Activated T-helper 1 cell treated with anti-CD3 and anti-CD28 coated beads, Interleukin-12 subunit alpha, Interleukin-12 subunit beta, Interleukin-2, Interleukin-4 antibody, amounts not matched to agents 30 ng/mL and 10 ng/mL and 1 ng/mL, durations not matched to agents 14 hours and 24 hours and 36 hours (primary cell): ENCODE measurements at regions of chr7 and their contacts with region 1.

Region 1: GRCh38 chr7:50449881-50450589 is at the start of gene FIGNL1:
- DNase-seq: peak; percentile 81
- H3K4me3 Mint-ChIP-seq: peak within 1 kb of the TSS; percentile 92
- H3K27ac Mint-ChIP-seq: peak within 1 kb of the TSS; percentile 90
- H3K4me1 Mint-ChIP-seq: peaks cover 42% of the 10 kb centered on the region
- H3K27me3 Mint-ChIP-seq: peaks cover 15% of the 10 kb centered on the region
- total RNA-seq, gene FIGNL1: 41.6 and 45.4 TPM in 2 replicates

Region 2: GRCh38 chr7:50073093-50073492 is 376.9 kb before region 1 on chr7:
- intact Hi-C with region 1: no loop called
- DNase-seq: no peak
- H3K4me3 Mint-ChIP-seq: no peak overlapping the region
- H3K27ac Mint-ChIP-seq: no peak overlapping the region
- H3K4me1 Mint-ChIP-seq: peaks cover 20% of the 10 kb centered on the region
- H3K27me3 Mint-ChIP-seq: peaks cover 29% of the 10 kb centered on the region

Region 3: DNA sequence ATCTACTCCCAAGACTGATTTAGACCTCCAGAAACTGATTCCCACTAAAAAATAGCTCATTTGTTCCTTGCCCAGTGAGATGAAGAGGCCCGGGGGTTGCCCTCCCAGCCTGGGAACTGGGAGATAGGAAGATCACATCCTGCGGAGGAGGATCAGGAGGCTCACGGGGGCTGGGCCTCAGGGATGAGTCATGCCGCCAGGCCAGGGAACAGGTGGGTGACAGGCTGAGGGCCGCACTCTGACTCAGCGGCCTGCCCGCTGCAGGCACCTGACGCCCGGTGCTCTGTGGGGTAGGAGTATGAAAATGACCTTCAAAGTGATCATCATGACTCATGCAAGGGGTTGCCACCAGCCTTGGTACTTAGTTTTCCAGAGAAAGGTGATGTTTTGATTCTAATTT is 252.5 kb before region 1 on chr7:
- intact Hi-C with region 1: loop called (anchors 2 kb)
- DNase-seq: no peak
- H3K4me3 Mint-ChIP-seq: peak overlapping the region; percentile 30
- H3K27ac Mint-ChIP-seq: peak overlapping the region; percentile 80
- H3K4me1 Mint-ChIP-seq: peaks cover 39% of the 10 kb centered on the region
- H3K27me3 Mint-ChIP-seq: peaks cover 24% of the 10 kb centered on the region

Region 4: DNA sequence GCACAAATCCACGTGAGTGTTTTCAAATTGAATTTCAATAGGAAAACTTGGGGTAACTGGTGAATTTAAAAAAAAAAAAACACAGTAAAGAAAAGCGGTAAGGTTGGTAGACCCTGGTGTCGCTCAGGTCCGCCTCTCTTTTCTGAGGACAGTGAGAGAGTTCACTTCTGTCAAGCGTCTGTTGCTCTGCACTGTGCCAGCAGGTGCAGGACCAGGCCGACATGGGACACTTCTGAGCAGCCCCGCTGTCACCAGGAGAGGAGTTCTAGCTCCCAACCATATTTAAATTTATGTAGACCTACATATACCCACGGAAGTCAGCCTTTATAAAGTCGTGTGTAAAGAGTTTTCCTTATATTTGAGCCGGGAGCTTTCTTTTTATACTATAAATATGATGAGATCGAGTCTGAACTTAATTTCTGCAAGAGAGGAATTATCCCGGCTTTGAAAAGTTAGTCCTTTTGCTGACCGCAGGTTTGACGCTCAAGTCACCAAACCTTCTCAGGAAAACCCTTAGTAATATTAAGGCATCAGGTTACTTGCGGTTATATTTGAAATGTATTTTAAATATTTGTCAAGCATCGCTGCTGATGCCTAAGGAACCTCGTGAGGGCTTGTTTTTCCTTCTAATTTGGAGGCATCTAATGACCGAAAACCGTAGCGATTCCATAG is 145.0 kb before region 1 on chr7:
- intact Hi-C with region 1: loop called (anchors 2 kb)
- DNase-seq: no peak
- H3K4me3 Mint-ChIP-seq: peak overlapping the region; percentile 99
- H3K27ac Mint-ChIP-seq: peak overlapping the region; percentile 98
- H3K4me1 Mint-ChIP-seq: peaks cover 52% of the 10 kb centered on the region
- H3K27me3 Mint-ChIP-seq: no peaks in the 10 kb centered on the region

Region 5: DNA sequence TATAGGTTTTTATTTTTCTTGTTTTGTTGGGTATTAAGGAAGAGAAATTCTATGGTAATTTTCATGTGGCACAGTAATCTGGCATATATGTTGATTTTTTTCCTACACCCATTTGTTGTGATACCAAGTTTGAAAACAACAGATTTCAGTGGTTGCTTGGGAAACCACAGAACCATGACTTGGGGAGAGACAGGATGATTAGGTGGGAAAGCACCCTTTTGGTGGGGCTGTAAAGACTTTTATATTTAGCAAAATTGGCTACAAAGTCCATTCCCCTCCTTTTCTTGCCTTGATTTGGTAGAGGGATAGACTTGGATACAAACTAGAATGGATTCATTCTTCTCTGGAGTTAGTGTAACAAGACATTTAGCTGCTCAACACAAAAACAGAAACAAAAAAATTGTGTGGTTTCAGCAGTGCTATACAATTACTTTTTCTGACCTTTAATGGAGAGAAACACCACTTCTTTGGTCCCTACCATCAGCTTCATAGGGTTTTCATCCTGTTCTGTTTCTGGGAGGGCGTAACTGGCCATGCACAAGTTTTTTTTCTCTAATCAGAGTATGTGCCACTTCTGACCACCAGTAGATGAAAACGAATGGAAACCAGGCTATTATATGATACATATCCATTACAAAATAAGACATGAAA is 52.6 kb before region 1 on chr7:
- intact Hi-C with region 1: loop called (anchors 1 kb)
- DNase-seq: peak; percentile 56
- H3K4me3 Mint-ChIP-seq: peak overlapping the region; percentile 21
- H3K27ac Mint-ChIP-seq: peak overlapping the region; percentile 92
- H3K4me1 Mint-ChIP-seq: peaks cover 74% of the 10 kb centered on the region
- H3K27me3 Mint-ChIP-seq: no peaks in the 10 kb centered on the region

Region 6: GRCh38 chr7:50595491-50596102 is 145.6 kb after region 1 on chr7:
- intact Hi-C with region 1: loop called (anchors 1 kb)
- DNase-seq: no peak
- H3K4me3 Mint-ChIP-seq: no peak overlapping the region
- H3K27ac Mint-ChIP-seq: no peak overlapping the region
- H3K4me1 Mint-ChIP-seq: peaks cover 20% of the 10 kb centered on the region
- H3K27me3 Mint-ChIP-seq: peaks cover 15% of the 10 kb centered on the region

Region 7: GRCh38 chr7:50832744-50833143 is 382.7 kb after region 1 on chr7:
- intact Hi-C with region 1: loop called (anchors 1 kb)
- DNase-seq: peak; percentile 42
- H3K4me3 Mint-ChIP-seq: peak overlapping the region; percentile 45
- H3K27ac Mint-ChIP-seq: peak overlapping the region; percentile 30
- H3K4me1 Mint-ChIP-seq: peaks cover 45% of the 10 kb centered on the region
- H3K27me3 Mint-ChIP-seq: peaks cover 21% of the 10 kb centered on the region